ENCODE measurements at regions of chr7 and their contacts with region 1.

Region 1: DNA sequence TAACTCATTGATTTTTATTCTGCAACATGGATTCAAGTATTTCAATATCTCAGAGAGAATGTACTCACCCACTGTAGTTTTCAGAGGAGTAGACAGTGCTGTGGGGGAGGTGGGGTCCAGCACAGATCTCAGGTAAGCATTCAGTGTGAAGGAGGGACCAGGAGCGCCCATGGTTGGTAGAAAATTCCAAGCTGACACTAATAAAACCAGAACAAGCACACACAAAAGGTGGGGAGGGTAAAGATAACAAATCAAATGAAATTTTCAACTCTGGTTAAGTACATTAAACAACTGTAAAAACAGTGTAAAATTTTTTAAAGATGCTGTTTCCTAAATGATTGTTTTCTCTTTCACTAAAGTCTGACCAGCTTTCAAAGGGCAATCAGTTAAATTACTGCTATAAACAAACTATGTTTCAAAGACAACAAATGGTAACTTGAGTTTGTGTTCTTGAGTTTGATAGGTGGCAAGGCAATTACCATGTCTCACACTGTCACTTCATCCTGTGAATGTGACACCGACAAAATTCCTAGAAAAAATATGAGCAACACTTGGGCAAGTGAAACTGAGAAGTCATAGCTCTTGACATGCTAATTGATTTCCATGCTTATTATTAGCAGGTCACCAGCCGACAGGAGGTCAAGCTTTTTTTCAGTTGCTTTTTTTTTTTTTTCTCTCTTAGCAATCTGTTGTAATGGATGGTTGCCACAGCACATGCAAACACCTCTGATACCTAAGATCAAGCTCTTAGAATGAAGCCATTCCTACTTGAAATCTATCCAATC is 205.8 kb upstream of the SLC26A5 start:
- DNase-seq: no peak
- ATAC-seq: no peak
- H3K4me3 ChIP-seq: no peak overlapping the region
- H3K27ac ChIP-seq: no peak overlapping the region
- H3K4me1 ChIP-seq: no peaks in the 10 kb centered on the region
- H3K27me3 ChIP-seq: no peaks in the 10 kb centered on the region

Region 2: GRCh38 chr7:103947026-103947655 is 295.4 kb after region 1 on chr7:
- intact Hi-C with region 1: loop called in 1 of 2 experiments (anchors 5 kb)
- DNase-seq: no peak
- ATAC-seq: no peak
- H3K4me3 ChIP-seq: no peak overlapping the region
- H3K27ac ChIP-seq: no peak overlapping the region
- H3K4me1 ChIP-seq: no peaks in the 10 kb centered on the region
- H3K27me3 ChIP-seq: no peaks in the 10 kb centered on the region

Measured in aorta (tissue), 5 donors.